SK-MEL-5 (cell line): ENCODE measurements at regions of chr17 and their contacts with region 1.

Region 1: DNA sequence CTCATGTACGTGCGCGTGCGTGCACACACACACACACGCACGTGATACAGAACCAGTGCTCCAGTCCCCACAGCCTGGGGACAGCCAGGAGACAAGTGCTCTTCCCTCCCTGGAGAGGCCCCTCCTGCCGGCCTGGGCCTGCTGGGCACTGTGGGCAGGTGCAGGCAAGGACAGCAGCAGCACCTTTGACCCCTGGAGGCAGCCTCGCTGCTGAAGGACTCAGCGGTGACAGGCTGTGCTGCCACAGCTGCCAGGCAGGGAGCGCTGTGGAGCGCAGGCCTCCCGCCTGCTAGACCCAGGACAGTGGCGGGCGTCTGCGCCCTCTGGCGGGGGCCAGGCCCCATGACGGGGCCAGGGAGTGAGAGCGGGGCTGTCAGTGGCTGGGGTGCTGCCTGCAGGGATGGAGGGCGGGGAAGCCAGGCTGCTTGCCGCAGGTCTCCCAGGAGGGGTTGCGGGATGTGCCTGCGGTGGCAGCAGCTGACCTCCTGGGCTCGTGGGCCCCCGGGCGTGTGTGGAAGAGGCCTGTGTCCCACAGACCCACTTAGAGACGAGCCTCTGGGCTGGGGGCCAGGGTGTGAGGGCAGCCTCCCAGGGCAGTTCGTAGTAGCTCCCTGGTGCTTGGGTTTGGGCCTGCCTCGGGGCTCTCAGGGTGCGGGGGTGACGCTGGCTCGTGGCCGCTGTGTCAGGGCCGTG is 63.5 kb upstream of the PVALEF start:
- DNase-seq: peak; percentile 93

Region 2: GRCh38 chr17:81018044-81018802 is 83.5 kb before region 1 on chr17:
- in situ Hi-C with region 1: loop called (anchors 25 kb)
- DNase-seq: peak; percentile 73